Activated T-helper 1 cell treated with anti-CD3 and anti-CD28 coated beads, Interleukin-12 subunit alpha, Interleukin-12 subunit beta, Interleukin-2, Interleukin-4 antibody, amounts not matched to agents 30 ng/mL and 10 ng/mL and 1 ng/mL, durations not matched to agents 14 hours and 24 hours and 36 hours (primary cell): ENCODE measurements at regions of chr12 and their contacts with region 1.

Region 1: GRCh38 chr12:123457980-123458783 is at the start of gene SNRNP35:
- DNase-seq: peak; percentile 79
- H3K4me3 Mint-ChIP-seq: peak within 1 kb of the TSS; percentile 95
- H3K27ac Mint-ChIP-seq: peak within 1 kb of the TSS; percentile 99
- H3K4me1 Mint-ChIP-seq: peaks cover 17% of the 10 kb centered on the region
- H3K27me3 Mint-ChIP-seq: no peaks in the 10 kb centered on the region
- total RNA-seq, gene SNRNP35: 31.5 and 34.5 TPM in 2 replicates

Region 2: GRCh38 chr12:123533672-123534643 is 75.8 kb after region 1 on chr12 and contains the start of gene RILPL1:
- intact Hi-C with region 1: loop called (anchors 1 kb)
- DNase-seq: peak; percentile 22
- H3K4me3 Mint-ChIP-seq: peak within 1 kb of the TSS; percentile 85
- H3K27ac Mint-ChIP-seq: peak within 1 kb of the TSS; percentile 74
- H3K4me1 Mint-ChIP-seq: peaks cover 25% of the 10 kb centered on the region
- H3K27me3 Mint-ChIP-seq: peaks cover 18% of the 10 kb centered on the region
- total RNA-seq, gene RILPL1: 4.4 and 4.5 TPM in 2 replicates

Region 3: GRCh38 chr12:123645878-123646277 is 187.7 kb after region 1 on chr12:
- intact Hi-C with region 1: no loop called
- DNase-seq: no peak
- H3K4me3 Mint-ChIP-seq: no peak overlapping the region
- H3K27ac Mint-ChIP-seq: no peak overlapping the region
- H3K4me1 Mint-ChIP-seq: no peaks in the 10 kb centered on the region
- H3K27me3 Mint-ChIP-seq: no peaks in the 10 kb centered on the region